ENCODE measurements at regions of chr5 and their contacts with region 1.

Region 1: DNA sequence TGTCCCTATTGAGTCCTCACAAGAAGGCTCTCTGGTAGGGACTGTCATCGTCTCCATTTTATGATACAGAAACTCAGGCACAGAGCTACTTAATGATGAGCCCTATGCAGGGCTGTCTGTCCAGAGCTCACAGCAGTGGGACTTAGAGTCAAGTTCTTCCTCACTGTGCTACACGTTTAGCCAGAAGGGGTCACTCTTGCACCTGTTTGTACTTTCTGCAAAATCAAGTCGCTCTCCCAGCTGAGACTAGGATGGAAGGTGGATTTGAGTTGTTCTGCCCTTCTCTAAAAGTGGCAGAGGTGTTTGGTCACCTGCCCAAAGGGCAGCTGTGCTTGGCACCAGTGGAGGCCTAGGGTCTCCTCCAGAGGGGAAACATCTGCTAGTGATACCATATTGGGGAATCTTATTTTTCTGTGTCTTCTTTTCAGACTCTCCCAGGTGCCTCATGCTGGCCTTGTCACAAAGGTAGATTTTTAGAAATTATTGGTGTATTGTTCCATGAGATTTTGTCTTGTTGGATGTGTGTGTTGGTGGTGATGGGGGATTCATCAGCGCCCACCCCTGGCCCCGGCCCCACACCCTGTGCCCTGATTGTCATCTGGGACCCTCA is 104.2 kb downstream of the PPARGC1B start:
- DNase-seq: peak; percentile 61 to 93
- H3K4me3 ChIP-seq: no peak overlapping the region
- H3K27ac ChIP-seq: no peak overlapping the region
- H3K4me1 ChIP-seq: peaks cover 0 to 6% (median 1%) of the 10 kb centered on the region in 4 donors
- H3K27me3 ChIP-seq: no peaks in the 10 kb centered on the region
- CTCF ChIP-seq: peak in 5 of 7 experiments; percentile 42 to 65 (median 48)
- EP300 ChIP-seq: no peak
- POLR2A ChIP-seq: no peak

Region 2: DNA sequence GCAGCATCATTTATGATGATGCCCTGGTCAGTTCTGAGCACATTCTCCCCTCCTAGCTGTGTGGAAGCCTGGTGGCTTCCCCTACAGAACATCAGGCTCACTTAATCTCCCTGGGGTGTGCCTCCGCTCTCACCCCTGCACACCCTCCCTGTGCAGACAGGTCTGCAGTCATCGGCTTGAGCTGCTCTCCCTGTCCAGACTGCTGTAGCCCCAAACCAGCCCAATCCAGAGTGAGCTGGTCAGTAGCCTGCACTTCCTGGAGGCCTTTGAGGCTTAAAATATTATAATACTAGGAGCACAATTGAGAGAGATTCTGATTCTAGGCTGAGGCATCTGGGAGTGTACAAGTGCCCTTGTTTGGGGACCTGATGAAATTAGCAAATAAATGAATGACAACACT is 44.1 kb before region 1 on chr5:
- intact Hi-C with region 1: no loop called
- DNase-seq: peak in 1 of 2 donors; percentile 77
- H3K4me3 ChIP-seq: no peak overlapping the region
- H3K27ac ChIP-seq: peak overlapping the region in 1 of 5 donors; percentile 45
- H3K4me1 ChIP-seq: peaks cover 2 to 49% (median 27%) of the 10 kb centered on the region in 4 donors
- H3K27me3 ChIP-seq: no peaks in the 10 kb centered on the region
- CTCF ChIP-seq: no peak
- EP300 ChIP-seq: no peak
- POLR2A ChIP-seq: no peak

Region 3: DNA sequence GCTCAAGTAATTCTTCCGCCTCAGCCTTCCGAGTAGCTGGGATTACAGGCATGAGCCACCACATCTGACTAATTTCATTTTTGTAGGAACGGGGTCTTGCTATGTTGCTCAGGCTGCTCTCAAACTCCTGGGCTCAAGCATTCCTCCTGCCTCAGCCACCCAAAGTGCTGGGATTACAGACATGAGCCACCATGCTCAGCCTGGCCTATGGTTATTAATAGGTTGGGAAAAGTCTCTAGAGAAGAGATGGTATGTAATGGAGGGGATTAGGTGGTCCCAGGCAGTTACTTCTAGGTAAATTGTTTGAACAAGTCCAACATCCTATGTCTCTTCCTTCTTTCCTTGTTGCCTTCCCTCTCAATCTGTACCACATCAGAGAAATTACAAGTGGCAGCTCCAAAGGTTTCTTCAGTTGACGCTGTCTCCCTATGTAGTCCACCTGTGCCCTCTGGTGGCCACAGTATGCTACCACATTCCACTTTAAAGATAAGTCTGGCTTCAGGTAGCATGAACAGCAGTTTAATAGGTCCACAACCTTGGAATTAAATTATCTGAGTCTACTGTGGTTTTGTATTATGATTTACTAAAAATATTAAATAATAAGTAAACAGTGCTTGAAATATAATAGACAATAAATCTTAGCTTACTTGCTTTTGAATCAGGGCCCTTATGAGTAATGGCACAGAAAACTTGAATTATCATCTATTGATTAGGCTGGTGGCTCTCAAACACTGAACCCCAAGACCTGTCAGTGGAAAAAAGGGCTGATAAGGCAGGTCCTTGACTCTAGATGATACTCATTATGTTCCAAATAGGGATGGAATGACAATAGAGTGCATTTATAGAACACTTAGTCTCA is 156.4 kb after region 1 on chr5:
- intact Hi-C with region 1: loop called (anchors 5 kb)
- DNase-seq: peak; percentile 81 to 93
- H3K4me3 ChIP-seq: no peak overlapping the region
- H3K27ac ChIP-seq: no peak overlapping the region
- H3K4me1 ChIP-seq: peaks cover 0 to 4% (median 0%) of the 10 kb centered on the region in 4 donors
- H3K27me3 ChIP-seq: no peaks in the 10 kb centered on the region
- CTCF ChIP-seq: peak in 5 of 7 experiments; percentile 81 to 91 (median 90)
- EP300 ChIP-seq: no peak
- POLR2A ChIP-seq: no peak

Measured in stomach (tissue), 19 donors.